Activated T-helper 2 cell treated with anti-CD3 and anti-CD28 coated beads, Interferon-gamma antibody, Interleukin-2, Interleukin-4, amounts not matched to agents 10 μg/mL and 5 μg/mL and 100 μg/mL, durations not matched to agents 14 hours and 24 hours and 36 hours (primary cell): ENCODE measurements at regions of chr1 and their contacts with region 1.

Region 1: DNA sequence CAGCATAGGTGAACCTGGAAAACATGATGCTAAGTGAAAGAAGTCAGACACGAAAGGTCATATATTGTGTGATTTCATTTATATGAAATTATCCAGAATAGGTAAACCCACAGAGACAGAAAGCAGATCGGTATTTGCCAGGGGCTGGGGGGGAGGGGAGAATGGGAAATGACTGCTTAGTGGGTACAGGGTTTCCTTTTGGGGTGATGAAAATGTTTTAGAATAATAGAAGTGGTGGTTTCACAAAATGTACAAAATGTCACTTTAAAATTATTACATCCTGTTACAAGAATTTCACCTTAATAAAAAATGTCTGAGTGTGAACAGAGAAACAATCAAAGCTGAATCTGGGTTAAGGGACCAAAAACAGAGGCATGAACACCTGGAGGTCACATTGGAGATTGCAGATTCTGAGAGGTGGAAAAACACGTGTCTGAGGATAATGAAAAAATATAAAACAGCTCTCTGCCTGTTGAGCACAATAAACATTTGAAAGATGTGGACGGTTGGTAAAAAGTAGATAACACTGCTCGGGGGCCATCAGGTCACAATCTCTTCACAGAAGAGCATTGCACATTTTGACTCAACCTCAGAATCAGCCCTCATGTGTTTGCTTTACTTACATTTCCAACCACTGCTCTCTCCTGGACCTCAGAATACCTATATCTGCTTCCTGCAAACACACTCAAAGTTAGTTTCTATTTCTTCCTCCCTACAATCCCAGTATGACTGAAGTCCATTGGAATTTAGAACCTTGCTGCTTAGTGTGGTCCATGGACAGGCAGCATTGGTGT is 3.2 kb downstream of the SLAMF6 start:
- DNase-seq: peak; percentile 31
- H3K4me3 Mint-ChIP-seq: peak overlapping the region; percentile 85
- H3K27ac Mint-ChIP-seq: peak overlapping the region; percentile 97
- H3K4me1 Mint-ChIP-seq: peaks cover 69% of the 10 kb centered on the region
- H3K27me3 Mint-ChIP-seq: no peaks in the 10 kb centered on the region

Region 2: GRCh38 chr1:160428655-160429054 is 91.2 kb before region 1 on chr1:
- intact Hi-C with region 1: loop called (anchors 2 kb)
- DNase-seq: no peak
- H3K4me3 Mint-ChIP-seq: no peak overlapping the region
- H3K27ac Mint-ChIP-seq: peak overlapping the region; percentile 73
- H3K4me1 Mint-ChIP-seq: peaks cover 46% of the 10 kb centered on the region
- H3K27me3 Mint-ChIP-seq: no peaks in the 10 kb centered on the region

Region 3: DNA sequence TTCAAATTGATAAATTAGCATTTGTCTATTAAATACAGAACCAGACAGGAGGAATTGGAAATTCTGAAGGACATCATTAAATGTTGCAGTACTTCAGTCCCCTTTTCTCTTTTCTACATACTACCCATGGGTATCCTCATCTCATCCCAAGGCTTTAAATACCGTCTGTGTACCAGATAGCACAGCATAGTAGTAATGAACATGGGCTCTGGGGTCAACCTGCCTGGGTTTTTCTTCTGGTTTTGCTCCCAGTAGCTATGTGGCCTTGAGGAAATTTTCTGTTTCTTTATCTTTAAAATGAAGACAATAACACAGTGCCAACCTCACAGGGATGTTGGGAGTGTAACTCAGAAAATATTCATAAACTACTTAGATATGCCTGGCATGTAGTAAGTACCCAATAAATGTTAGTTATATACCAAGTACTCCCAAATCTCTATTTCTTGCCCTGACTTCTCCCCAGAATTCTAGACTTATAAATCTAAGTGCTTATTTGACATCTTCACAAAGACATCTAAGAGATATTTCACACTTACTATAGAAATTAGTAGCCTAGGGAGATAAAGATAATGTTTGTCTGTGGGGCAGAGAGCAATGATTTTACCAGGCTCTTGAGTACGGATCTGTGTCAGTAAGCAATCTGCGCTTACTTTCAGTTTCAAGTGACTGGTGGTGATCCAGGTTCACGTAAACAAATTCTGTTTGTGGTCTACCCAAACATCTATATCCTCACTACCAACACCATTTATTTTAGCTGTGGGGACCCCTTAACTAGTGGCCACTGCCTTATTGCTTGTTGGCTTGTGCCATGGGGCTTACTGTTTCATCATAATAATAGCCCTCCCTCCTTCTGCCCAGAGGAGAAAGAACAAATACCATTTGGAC is 82.2 kb before region 1 on chr1:
- intact Hi-C with region 1: loop called (anchors 2 kb)
- DNase-seq: peak; percentile 22
- H3K4me3 Mint-ChIP-seq: peak overlapping the region; percentile 43
- H3K27ac Mint-ChIP-seq: peak overlapping the region; percentile 73
- H3K4me1 Mint-ChIP-seq: peaks cover 28% of the 10 kb centered on the region
- H3K27me3 Mint-ChIP-seq: no peaks in the 10 kb centered on the region

Region 4: GRCh38 chr1:160539990-160540858 is 20.4 kb after region 1 on chr1:
- intact Hi-C with region 1: loop called (anchors 1 kb)
- DNase-seq: peak; percentile 66
- H3K4me3 Mint-ChIP-seq: peak overlapping the region; percentile 56
- H3K27ac Mint-ChIP-seq: peak overlapping the region; percentile 83
- H3K4me1 Mint-ChIP-seq: peaks cover 48% of the 10 kb centered on the region
- H3K27me3 Mint-ChIP-seq: no peaks in the 10 kb centered on the region

Region 5: DNA sequence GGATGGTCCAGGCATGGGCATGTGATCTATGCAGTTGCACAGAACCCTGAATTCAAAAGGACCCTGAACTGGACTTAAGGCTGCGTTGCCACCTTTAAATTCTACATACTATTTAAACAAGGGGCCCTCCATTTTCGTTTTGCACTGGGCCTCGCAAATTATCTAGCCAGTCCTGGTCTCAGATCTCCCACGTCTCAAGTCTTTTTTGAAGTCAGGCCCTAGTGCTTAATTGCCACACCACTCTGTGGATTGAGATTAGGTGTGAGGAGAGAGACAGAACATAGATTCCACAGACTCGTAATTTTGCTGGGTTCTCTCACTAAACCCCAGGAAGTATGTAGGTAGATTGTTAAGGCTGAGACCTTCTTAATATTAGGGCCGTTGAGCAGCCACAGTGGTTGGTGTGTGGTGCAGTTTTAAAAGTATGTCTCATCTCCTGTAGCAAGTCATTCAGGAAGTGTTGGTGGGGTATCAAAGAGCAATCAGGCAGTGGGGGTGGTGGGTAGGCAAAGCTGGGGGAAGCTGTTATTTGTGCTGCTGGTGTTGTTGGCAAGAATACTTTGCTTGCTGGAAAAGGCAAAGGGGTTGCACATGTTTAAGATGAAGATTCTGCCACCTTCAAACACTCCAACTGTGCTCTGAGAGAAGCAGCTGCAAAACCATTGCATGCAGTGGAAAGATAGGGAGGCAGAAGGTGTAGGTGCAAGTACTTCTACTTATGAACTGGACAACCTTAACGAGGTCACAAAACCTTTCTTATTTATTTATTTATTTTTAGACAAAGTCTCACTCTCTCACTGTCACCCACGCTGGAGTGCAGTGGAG is 48.2 kb after region 1 on chr1:
- intact Hi-C with region 1: loop called (anchors 2 kb)
- DNase-seq: peak; percentile 59
- H3K4me3 Mint-ChIP-seq: peak overlapping the region; percentile 76
- H3K27ac Mint-ChIP-seq: peak overlapping the region; percentile 98
- H3K4me1 Mint-ChIP-seq: peaks cover 72% of the 10 kb centered on the region
- H3K27me3 Mint-ChIP-seq: no peaks in the 10 kb centered on the region

Region 6: GRCh38 chr1:160675641-160676410 is 156.0 kb after region 1 on chr1:
- intact Hi-C with region 1: loop called (anchors 5 kb)
- DNase-seq: peak; percentile 63
- H3K4me3 Mint-ChIP-seq: peak overlapping the region; percentile 41
- H3K27ac Mint-ChIP-seq: peak overlapping the region; percentile 68
- H3K4me1 Mint-ChIP-seq: peaks cover 28% of the 10 kb centered on the region
- H3K27me3 Mint-ChIP-seq: no peaks in the 10 kb centered on the region